Caco-2 (cell line): ENCODE measurements at regions of chr19 and their contacts with region 1.

Region 1: GRCh38 chr19:14136509-14137281 is at the start of gene ASF1B:
- DNase-seq: peak; percentile 98 to 99
- H3K4me3 ChIP-seq: peak within 1 kb of the TSS; percentile 93
- H3K4me3 Mint-ChIP-seq: peak within 1 kb of the TSS; percentile 74
- H3K27ac Mint-ChIP-seq: peak within 1 kb of the TSS; percentile 83
- H3K4me1 ChIP-seq: peaks cover 5% of the 10 kb centered on the region; the same call in 1 of the 2 replicates
- H3K4me1 Mint-ChIP-seq: peaks cover 7% of the 10 kb centered on the region
- H3K27me3 ChIP-seq: no peaks in the 10 kb centered on the region
- H3K27me3 Mint-ChIP-seq: no peaks in the 10 kb centered on the region
- CTCF ChIP-seq: peak; percentile 35 to 75
- total RNA-seq, gene ASF1B: 37.7 and 40.2 TPM in 2 replicates

Region 2: GRCh38 chr19:13872695-13873389 is 263.9 kb before region 1 on chr19:
- CTCF ChIA-PET with region 1: interaction called, 3 read pairs
- POLR2A ChIA-PET with region 1: interaction called, 12 read pairs
- intact Hi-C with region 1: no loop called
- DNase-seq: no peak
- H3K4me3 ChIP-seq: peak overlapping the region; percentile 39
- H3K4me3 Mint-ChIP-seq: peak overlapping the region; percentile 72
- H3K27ac Mint-ChIP-seq: no peak overlapping the region
- H3K4me1 ChIP-seq: 0 out of 2 replicates have a peak, but pooled peaks cover 4% of the 10 kb centered on the region
- H3K4me1 Mint-ChIP-seq: peaks cover 7% of the 10 kb centered on the region
- H3K27me3 ChIP-seq: no peaks in the 10 kb centered on the region
- H3K27me3 Mint-ChIP-seq: no peaks in the 10 kb centered on the region
- CTCF ChIP-seq: peak in 1 of 2 experiments; percentile 20

Region 3: GRCh38 chr19:14073261-14073924 is 63.3 kb before region 1 on chr19:
- CTCF ChIA-PET with region 1: interaction called, 4 read pairs
- POLR2A ChIA-PET with region 1: interaction called, 5 read pairs
- intact Hi-C with region 1: loop called (anchors 5 kb)
- DNase-seq: peak; percentile 54 to 85
- H3K4me3 ChIP-seq: peak overlapping the region; percentile 84
- H3K4me3 Mint-ChIP-seq: peak overlapping the region; percentile 100
- H3K27ac Mint-ChIP-seq: peak overlapping the region; percentile 97
- H3K4me1 ChIP-seq: no peaks in the 10 kb centered on the region
- H3K4me1 Mint-ChIP-seq: no peaks in the 10 kb centered on the region
- H3K27me3 ChIP-seq: no peaks in the 10 kb centered on the region
- H3K27me3 Mint-ChIP-seq: no peaks in the 10 kb centered on the region
- CTCF ChIP-seq: peak in 1 of 2 experiments; percentile 36

Region 4: DNA sequence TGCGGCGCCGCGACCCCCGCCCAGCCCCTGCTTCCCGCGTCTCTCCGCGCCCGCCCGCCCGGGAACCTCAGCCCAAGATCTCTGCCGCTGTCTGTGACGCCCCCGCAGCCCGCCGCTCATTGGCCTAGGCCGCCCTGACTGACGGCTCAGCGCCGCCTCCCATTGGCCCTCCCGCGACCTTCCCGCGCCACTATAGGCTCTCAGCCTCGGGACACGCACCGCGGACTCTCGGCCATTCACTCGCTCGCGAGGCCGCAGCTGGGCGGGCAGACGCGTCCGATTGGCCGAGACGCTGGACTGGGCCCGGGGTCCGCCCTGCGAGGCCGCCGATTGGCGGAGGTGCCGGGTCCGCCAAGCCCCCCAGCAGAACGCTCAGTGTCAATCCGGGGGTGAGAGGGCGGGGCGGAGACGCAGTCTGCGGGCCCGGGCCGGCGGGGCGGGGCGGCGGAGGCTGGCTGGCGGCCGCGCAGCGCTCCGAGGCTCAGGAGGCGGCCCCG is 19.0 kb before region 1 on chr19 and contains the start of gene PRKACA:
- CTCF ChIA-PET with region 1: interaction called, 16 read pairs
- POLR2A ChIA-PET with region 1: interaction called, 16 read pairs
- intact Hi-C with region 1: loop called (anchors 2 kb)
- DNase-seq: peak; percentile 98 to 99
- H3K4me3 ChIP-seq: peak within 1 kb of the TSS; percentile 79
- H3K4me3 Mint-ChIP-seq: peak within 1 kb of the TSS; percentile 90
- H3K27ac Mint-ChIP-seq: peak within 1 kb of the TSS; percentile 85
- H3K4me1 ChIP-seq: peaks cover 13% of the 10 kb centered on the region
- H3K4me1 Mint-ChIP-seq: peaks cover 8% of the 10 kb centered on the region
- H3K27me3 ChIP-seq: no peaks in the 10 kb centered on the region
- H3K27me3 Mint-ChIP-seq: no peaks in the 10 kb centered on the region
- CTCF ChIP-seq: no peak
- total RNA-seq, gene PRKACA: 46.4 and 51.9 TPM in 2 replicates

Region 5: DNA sequence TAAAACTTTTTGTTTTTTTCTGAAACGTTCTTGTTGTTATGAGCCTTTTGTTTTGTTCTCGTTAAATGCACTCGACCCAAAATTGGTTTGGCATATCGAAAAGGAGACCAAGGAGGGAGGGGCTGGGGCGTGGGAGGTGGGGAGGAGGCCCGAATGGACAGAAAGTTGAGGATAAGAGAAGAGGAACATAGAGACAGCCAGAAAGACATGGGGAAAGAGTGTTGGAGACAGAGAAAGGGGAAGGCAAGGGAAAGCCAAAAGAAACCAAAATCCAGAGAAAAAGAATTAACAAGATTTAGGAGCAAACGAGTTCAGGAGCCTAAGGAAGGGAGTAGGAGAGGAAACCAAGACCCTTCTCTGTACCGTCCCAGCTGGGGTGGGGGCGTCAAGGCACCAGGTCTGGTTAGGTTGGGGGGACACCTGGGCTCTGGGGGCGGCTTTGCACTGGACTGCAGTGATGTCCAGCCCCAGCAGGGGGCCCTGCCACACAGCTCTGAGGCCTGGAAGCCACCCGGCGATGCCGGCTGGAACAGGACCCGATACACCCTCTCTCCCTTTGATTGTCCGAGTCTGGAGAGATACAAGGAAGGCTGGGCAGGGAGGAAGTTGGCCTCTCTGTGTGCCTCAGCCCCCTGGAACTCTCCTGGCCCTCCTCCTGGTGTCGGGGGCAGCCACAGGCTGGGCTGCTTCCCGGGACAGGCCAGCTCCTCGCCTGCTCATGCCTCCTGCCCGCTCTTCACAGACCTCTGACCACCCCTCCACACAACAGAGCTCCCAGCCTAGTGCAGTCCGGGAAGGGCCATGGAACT is 11.3 kb after region 1 on chr19:
- CTCF ChIA-PET with region 1: interaction called, 14 read pairs
- POLR2A ChIA-PET with region 1: interaction called, 4 read pairs
- intact Hi-C with region 1: no loop called
- DNase-seq: peak; percentile 53 to 65
- H3K4me3 ChIP-seq: no peak overlapping the region
- H3K4me3 Mint-ChIP-seq: no peak overlapping the region
- H3K27ac Mint-ChIP-seq: no peak overlapping the region
- H3K4me1 ChIP-seq: no peaks in the 10 kb centered on the region
- H3K4me1 Mint-ChIP-seq: no peaks in the 10 kb centered on the region
- H3K27me3 ChIP-seq: no peaks in the 10 kb centered on the region
- H3K27me3 Mint-ChIP-seq: no peaks in the 10 kb centered on the region
- CTCF ChIP-seq: peak; percentile 69 to 83

Region 6: DNA sequence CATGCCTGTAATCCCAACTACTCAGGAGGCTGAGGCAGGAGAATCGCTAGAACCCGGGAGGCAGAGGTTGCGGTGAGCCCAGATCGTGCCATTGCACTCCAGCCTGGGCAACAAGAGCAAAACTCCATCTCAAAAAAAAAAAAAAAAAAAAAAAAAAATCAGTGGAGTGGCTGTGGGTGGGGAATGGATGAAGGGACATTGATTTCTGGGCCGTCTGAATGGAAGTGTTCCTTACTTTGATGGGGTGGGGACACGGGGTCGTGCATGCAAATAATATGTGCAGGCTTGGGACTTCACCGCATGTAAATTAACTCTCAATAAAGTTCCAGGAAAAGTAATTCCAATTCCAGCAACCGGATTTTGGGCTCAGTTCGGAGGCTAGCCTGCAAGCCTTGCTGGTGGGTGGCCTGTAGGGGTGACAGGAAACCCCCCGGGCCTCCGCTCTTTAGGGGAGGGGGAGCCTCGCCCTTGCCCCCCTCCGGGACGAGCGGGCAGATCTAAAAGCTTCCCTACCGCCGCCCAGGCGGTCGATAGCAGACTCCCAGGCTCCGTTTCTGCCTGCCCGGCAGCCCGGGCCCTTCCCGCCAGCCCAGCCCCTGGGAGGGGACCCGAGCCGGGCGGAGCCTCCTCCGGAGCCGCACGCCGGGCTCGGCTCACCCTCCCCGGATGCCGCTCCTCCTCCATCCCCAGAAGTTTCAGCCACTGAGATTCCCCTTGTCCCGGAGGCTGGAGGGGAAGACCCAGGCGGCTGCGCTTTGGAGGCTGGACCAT is 196.6 kb after region 1 on chr19:
- CTCF ChIA-PET with region 1: no interaction called
- POLR2A ChIA-PET with region 1: interaction called, 12 read pairs
- intact Hi-C with region 1: no loop called
- DNase-seq: peak in 1 of 2 experiments; percentile 32
- H3K4me3 ChIP-seq: peak overlapping the region; percentile 30
- H3K4me3 Mint-ChIP-seq: peak overlapping the region; percentile 62
- H3K27ac Mint-ChIP-seq: no peak overlapping the region
- H3K4me1 ChIP-seq: no peaks in the 10 kb centered on the region
- H3K4me1 Mint-ChIP-seq: no peaks in the 10 kb centered on the region
- H3K27me3 ChIP-seq: no peaks in the 10 kb centered on the region
- H3K27me3 Mint-ChIP-seq: no peaks in the 10 kb centered on the region
- CTCF ChIP-seq: no peak

Region 7: DNA sequence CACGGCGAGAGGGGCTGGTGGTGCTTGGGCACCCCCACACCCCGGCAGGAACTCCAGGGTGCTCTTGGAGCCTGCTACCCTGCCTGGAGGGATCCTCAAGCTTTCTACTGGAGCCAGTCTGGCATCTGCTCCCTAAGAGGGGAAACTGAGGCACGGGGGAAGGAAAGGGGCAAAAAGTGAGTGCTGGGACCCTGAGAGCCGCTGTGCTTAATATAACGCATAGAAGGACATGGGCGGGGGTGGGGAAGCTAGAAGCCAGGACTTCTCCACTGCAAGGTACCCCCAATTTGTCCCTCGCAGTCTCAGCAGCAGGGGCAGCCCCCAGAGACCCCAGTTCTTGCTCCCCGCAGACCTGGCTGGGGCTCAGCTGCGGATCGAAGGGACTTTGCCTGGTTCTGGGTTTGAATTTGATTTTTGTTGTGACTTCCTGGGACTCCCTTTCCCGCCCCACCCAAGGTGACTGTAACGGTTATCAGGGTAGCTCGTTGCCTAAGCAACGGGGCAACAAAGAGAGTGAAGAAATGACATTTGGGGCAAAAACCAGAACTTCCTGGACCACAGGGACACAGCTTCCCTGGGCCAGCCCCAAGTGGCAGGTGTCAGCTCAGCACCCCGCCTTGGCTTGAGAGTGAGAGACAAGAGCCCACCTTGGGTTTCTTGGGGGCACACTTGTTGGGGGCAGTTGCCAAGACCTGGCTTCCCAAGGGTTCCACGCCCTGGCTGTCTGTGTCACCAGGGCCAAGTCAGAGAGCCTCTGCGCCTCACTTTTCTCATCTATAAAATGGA is 245.2 kb after region 1 on chr19:
- CTCF ChIA-PET with region 1: interaction called, 3 read pairs
- POLR2A ChIA-PET with region 1: interaction called, 11 read pairs
- intact Hi-C with region 1: no loop called
- DNase-seq: peak; percentile 54 to 62
- H3K4me3 ChIP-seq: peak overlapping the region; percentile 53
- H3K4me3 Mint-ChIP-seq: peak overlapping the region; percentile 80
- H3K27ac Mint-ChIP-seq: peak overlapping the region; percentile 92
- H3K4me1 ChIP-seq: peaks cover 8% of the 10 kb centered on the region
- H3K4me1 Mint-ChIP-seq: peaks cover 13% of the 10 kb centered on the region
- H3K27me3 ChIP-seq: no peaks in the 10 kb centered on the region
- H3K27me3 Mint-ChIP-seq: no peaks in the 10 kb centered on the region
- CTCF ChIP-seq: no peak

Region 8: DNA sequence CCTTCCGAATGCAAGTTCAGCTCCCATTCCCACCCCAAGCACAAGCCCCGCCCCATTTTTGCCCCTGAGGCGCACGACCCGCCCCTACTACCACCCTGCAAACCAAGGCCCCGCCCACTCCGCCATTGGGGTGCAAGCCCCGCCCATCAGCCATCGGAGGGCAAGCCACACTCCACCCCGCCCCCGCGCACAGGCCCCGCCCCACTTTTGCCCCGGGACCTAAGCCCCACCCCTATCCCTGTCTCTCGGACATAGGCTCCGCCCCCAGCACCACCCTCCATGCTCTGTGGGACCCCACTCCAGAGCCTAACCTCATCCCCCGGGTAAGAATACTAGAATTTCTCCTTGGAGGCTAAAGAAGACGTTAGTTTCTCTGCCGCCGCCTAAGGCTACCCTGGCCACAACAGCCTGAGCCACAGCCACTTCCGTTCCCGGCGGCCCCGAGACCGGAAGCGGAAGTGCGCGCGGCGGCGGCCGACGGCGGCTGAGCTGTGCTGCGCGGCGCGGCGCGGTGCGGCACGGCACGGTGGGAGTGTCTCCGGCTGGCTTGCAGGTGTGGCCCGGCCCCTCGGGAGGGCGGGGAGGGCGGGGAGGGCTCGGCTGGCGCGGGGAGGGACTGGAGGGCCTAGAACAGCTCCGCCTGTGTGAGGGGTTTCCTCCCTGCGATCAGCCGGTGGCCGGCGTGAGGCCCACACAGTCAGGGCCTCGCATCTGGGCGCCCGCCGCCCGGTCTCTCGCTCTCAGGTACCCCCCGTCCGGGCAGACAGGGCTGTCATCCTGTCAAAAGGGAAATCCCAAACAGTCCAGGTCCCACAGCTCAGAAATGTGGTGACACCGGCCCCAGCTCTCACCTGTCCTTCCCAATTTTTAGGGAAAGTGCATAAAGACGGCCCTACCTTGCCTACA is 553.2 kb after region 1 on chr19 and contains the start of gene ZNF333:
- CTCF ChIA-PET with region 1: no interaction called
- POLR2A ChIA-PET with region 1: no interaction called
- intact Hi-C with region 1: no loop called
- DNase-seq: peak; percentile 94 to 95
- H3K4me3 ChIP-seq: peak within 1 kb of the TSS; percentile 78
- H3K4me3 Mint-ChIP-seq: peak within 1 kb of the TSS; percentile 86
- H3K27ac Mint-ChIP-seq: peak within 1 kb of the TSS; percentile 97
- H3K4me1 ChIP-seq: peaks cover 4% of the 10 kb centered on the region; the same call in 1 of the 2 replicates
- H3K4me1 Mint-ChIP-seq: no peaks in the 10 kb centered on the region
- H3K27me3 ChIP-seq: no peaks in the 10 kb centered on the region
- H3K27me3 Mint-ChIP-seq: no peaks in the 10 kb centered on the region
- CTCF ChIP-seq: no peak
- total RNA-seq, gene ZNF333: 5.3 and 6.0 TPM in 2 replicates